AG04450 (cell line): ENCODE measurements at regions of chr5 and their contacts with region 1.

Region 1: GRCh38 chr5:150846654-150847333 is 473 bp downstream of the IRGM start:
- DNase-seq: peak; percentile 72
- H3K4me3 ChIP-seq: no peak overlapping the region
- H3K27ac ChIP-seq: no peak overlapping the region
- H3K27me3 ChIP-seq: peaks cover 3% of the 10 kb centered on the region
- CTCF ChIP-seq: peak; percentile 67

Region 2: GRCh38 chr5:150486402-150487198 is 360.2 kb before region 1 on chr5:
- CTCF ChIA-PET with region 1: no interaction called
- POLR2A ChIA-PET with region 1: interaction called, 18 read pairs
- DNase-seq: no peak
- H3K4me3 ChIP-seq: peak overlapping the region; percentile 87
- H3K27ac ChIP-seq: peak overlapping the region; percentile 77
- H3K27me3 ChIP-seq: no peaks in the 10 kb centered on the region
- CTCF ChIP-seq: no peak

Region 3: GRCh38 chr5:150700594-150701293 is 146.1 kb before region 1 on chr5 and contains the start of gene RBM22:
- CTCF ChIA-PET with region 1: interaction called, 15 read pairs
- POLR2A ChIA-PET with region 1: no interaction called
- DNase-seq: peak; percentile 58
- H3K4me3 ChIP-seq: peak within 1 kb of the TSS; percentile 95
- H3K27ac ChIP-seq: peak within 1 kb of the TSS; percentile 91
- H3K27me3 ChIP-seq: no peaks in the 10 kb centered on the region
- CTCF ChIP-seq: peak; percentile 63
- polyA plus RNA-seq, gene RBM22: 42.4 and 49.5 TPM in 2 replicates

Region 4: DNA sequence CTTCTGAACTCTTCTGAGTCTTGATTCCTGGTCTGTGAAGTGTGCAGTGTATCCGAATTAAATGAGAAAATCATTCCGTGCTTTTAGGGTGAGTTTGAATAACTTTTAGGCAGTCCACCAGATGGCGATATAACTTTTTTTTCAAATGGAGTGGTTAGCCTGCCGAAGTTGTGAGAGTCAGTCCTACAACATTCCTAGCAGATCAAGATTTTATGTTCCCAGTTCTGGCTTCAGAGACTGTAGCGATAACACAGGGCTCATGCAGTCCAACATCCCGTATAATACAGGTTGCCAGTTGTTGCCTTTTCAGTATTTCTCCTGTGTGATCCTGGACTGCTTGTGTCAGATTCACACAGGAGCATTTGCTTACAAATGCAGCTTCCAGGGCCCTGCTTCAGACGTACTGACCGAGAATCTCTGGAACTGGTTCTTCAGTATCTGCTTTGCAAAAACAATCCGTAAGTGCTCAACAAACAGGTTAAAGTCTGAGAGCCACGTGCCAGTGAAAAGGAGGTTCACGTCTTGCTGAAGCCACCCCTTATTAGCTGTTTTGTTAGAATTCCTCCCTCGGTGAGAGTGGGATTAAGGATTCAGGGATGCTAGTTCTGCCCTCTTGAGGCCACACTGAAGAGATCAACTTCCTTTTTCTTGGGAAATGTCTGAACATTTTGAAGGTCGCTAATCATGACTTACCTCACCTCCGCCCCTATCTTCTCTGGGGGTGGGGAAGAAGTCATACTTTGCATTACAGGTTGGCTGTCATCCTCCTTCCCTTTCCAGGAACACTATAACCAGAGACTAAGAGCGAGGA is 45.5 kb before region 1 on chr5:
- CTCF ChIA-PET with region 1: interaction called, 43 read pairs
- POLR2A ChIA-PET with region 1: no interaction called
- DNase-seq: no peak
- H3K4me3 ChIP-seq: peak overlapping the region; percentile 40
- H3K27ac ChIP-seq: no peak overlapping the region
- H3K27me3 ChIP-seq: no peaks in the 10 kb centered on the region
- CTCF ChIP-seq: peak; percentile 64

Region 5: GRCh38 chr5:150862070-150862469 is 15.3 kb after region 1 on chr5:
- CTCF ChIA-PET with region 1: no interaction called
- POLR2A ChIA-PET with region 1: no interaction called
- DNase-seq: no peak
- H3K4me3 ChIP-seq: no peak overlapping the region
- H3K27ac ChIP-seq: no peak overlapping the region
- H3K27me3 ChIP-seq: peaks cover 4% of the 10 kb centered on the region
- CTCF ChIP-seq: no peak

Region 6: GRCh38 chr5:150946351-150946905 is 99.6 kb after region 1 on chr5:
- CTCF ChIA-PET with region 1: no interaction called
- POLR2A ChIA-PET with region 1: no interaction called
- DNase-seq: peak; percentile 2
- H3K4me3 ChIP-seq: peak overlapping the region; percentile 49
- H3K27ac ChIP-seq: no peak overlapping the region
- H3K27me3 ChIP-seq: no peaks in the 10 kb centered on the region
- CTCF ChIP-seq: no peak